ENCODE measurements at regions of chr3 and their contacts with region 1.

Region 1: GRCh38 chr3:12815719-12816118 is 19.2 kb downstream of the CAND2 start:
- DNase-seq: no peak
- H3K4me3 ChIP-seq: no peak overlapping the region
- H3K27ac ChIP-seq: no peak overlapping the region
- H3K4me1 ChIP-seq: no peaks in the 10 kb centered on the region
- H3K27me3 ChIP-seq: no peaks in the 10 kb centered on the region
- CTCF ChIP-seq: no peak

Region 2: GRCh38 chr3:12768579-12769527 is 46.9 kb before region 1 on chr3:
- CTCF ChIA-PET with region 1: no interaction called
- dilution Hi-C with region 1: loop called (anchors 5 kb)
- in situ Hi-C with region 1: no loop called
- intact Hi-C with region 1: no loop called
- DNase-seq: no peak
- H3K4me3 ChIP-seq: no peak overlapping the region
- H3K27ac ChIP-seq: no peak overlapping the region
- H3K4me1 ChIP-seq: peaks cover 7% of the 10 kb centered on the region
- H3K27me3 ChIP-seq: no peaks in the 10 kb centered on the region
- CTCF ChIP-seq: no peak

Measured in mammary epithelial cell (primary cell).